Activated CD4-positive, alpha-beta memory T cell treated with anti-CD3 and anti-CD28 coated beads for 36 hours (primary cell): ENCODE measurements at regions of chr7 and their contacts with region 1.

Region 1: DNA sequence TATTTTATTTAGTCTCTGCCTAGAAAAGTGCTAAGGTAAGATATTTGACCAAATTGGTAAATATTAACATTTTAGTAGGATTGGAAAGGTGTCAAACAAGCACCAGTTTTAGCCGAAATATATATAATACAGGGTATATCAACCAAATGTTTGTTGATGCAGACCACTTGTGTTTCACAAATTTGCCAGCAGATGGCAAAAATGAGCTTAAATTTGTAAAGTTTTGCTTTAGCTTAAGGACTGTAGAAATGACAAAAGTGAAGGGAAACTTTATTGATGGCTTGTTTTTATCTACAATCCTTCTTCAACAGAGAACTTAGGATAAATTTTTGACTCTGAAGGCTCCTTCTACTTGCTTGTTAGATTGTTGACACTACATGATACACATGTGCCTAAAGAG is 4.8 kb upstream of the POLR1F start:
- DNase-seq: peak; percentile 39
- H3K4me3 Mint-ChIP-seq: no peak overlapping the region
- H3K27ac Mint-ChIP-seq: no peak overlapping the region
- H3K4me1 Mint-ChIP-seq: peaks cover 12% of the 10 kb centered on the region
- H3K27me3 Mint-ChIP-seq: peaks cover 4% of the 10 kb centered on the region

Region 2: DNA sequence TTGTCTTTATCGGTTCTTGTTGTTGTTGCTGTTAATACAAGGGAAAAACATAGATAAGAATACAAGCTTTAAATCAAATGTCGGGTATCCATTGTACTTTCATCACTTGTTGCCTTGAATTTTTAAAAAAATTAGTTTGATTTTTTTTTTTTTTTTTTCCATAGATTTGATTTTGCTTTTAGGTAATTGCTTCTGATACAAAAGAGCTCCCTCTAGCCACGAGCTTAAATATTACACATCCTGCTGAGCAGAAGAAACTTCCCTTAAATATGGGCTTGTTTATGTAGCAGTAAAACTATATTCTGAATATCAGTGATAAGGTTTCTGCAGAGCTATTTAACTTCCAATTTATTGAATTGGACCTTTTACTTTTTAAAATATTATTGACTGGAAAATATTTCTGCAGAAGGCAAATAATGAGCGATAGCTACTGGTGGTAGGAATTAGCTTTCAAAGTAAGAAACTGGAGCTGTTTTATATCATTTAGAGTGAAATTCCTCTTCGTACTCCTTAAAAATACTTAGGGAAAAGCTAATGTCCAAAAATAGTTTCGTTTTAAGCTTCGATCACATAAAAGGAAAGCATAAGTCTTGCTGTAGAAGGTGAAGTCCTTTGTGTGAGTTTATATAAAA is 221.7 kb before region 1 on chr7:
- CTCF ChIA-PET with region 1: no interaction called
- POLR2A ChIA-PET with region 1: no interaction called
- intact Hi-C with region 1: no loop called
- DNase-seq: no peak
- H3K4me3 Mint-ChIP-seq: no peak overlapping the region
- H3K27ac Mint-ChIP-seq: no peak overlapping the region
- H3K4me1 Mint-ChIP-seq: no peaks in the 10 kb centered on the region
- H3K27me3 Mint-ChIP-seq: no peaks in the 10 kb centered on the region

Region 3: DNA sequence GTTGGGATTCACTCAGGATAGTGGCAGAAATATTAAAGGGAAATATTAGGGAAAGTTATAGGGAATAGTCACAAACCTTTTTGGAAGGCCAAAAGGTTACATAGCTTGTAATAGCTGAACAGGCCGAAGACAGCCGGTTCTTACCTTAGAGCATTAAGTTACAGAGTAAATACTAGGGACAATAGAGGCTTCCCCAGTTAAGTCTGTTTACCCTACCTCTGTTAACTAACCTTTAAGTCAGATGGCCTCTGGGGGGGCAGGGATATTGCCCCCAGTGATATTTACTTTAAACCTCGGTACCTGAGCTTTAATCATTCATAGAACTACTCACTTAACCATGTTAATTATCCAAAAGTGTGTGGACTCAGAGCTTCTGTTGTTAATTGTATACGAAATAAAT is 12.2 kb before region 1 on chr7:
- CTCF ChIA-PET with region 1: interaction called, 15 read pairs
- POLR2A ChIA-PET with region 1: interaction called, 4 read pairs
- intact Hi-C with region 1: no loop called
- DNase-seq: no peak
- H3K4me3 Mint-ChIP-seq: no peak overlapping the region
- H3K27ac Mint-ChIP-seq: no peak overlapping the region
- H3K4me1 Mint-ChIP-seq: peaks cover 8% of the 10 kb centered on the region
- H3K27me3 Mint-ChIP-seq: no peaks in the 10 kb centered on the region

Region 4: DNA sequence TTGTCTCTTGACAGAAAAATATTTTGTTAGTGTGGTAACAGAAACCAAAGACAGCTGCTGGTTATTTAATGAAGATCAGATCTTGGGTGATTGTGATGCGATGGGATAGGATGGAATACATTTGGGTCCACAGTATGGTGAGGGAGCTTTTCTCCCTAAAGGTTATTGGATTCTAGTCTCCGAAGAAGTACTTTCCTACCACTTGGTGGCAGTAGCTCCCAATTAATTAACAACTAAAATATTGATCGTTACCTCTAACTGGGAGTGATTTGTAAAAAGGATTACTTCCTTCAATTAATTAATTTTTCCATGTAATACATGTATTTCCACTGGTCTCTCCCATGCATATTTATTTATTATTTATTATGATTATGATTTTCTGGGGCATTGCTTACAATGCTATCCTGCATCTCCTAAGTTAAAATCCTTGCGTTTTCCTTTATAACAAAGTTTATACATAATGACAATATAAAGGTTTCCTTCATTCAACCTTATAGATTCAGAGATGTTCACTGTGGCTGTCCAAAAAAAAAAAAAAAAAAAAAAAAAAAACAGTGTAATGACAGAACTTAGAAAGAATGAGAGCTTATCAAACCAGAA is 34.2 kb after region 1 on chr7:
- CTCF ChIA-PET with region 1: interaction called, 18 read pairs
- POLR2A ChIA-PET with region 1: no interaction called
- intact Hi-C with region 1: no loop called
- DNase-seq: no peak
- H3K4me3 Mint-ChIP-seq: no peak overlapping the region
- H3K27ac Mint-ChIP-seq: no peak overlapping the region
- H3K4me1 Mint-ChIP-seq: no peaks in the 10 kb centered on the region
- H3K27me3 Mint-ChIP-seq: peaks cover 5% of the 10 kb centered on the region

Region 5: GRCh38 chr7:19999681-20000080 is 286.0 kb after region 1 on chr7:
- CTCF ChIA-PET with region 1: no interaction called
- POLR2A ChIA-PET with region 1: no interaction called
- intact Hi-C with region 1: no loop called
- DNase-seq: no peak
- H3K4me3 Mint-ChIP-seq: no peak overlapping the region
- H3K27ac Mint-ChIP-seq: no peak overlapping the region
- H3K4me1 Mint-ChIP-seq: no peaks in the 10 kb centered on the region
- H3K27me3 Mint-ChIP-seq: no peaks in the 10 kb centered on the region

Region 6: GRCh38 chr7:20172736-20173334 is 459.2 kb after region 1 on chr7:
- CTCF ChIA-PET with region 1: interaction called, 5 read pairs
- POLR2A ChIA-PET with region 1: no interaction called
- intact Hi-C with region 1: loop called (anchors 1 kb)
- DNase-seq: peak; percentile 28
- H3K4me3 Mint-ChIP-seq: no peak overlapping the region
- H3K27ac Mint-ChIP-seq: no peak overlapping the region
- H3K4me1 Mint-ChIP-seq: no peaks in the 10 kb centered on the region
- H3K27me3 Mint-ChIP-seq: no peaks in the 10 kb centered on the region

Region 7: GRCh38 chr7:20310963-20311742 is 597.5 kb after region 1 on chr7:
- CTCF ChIA-PET with region 1: interaction called, 11 read pairs
- POLR2A ChIA-PET with region 1: no interaction called
- intact Hi-C with region 1: loop called (anchors 10 kb)
- DNase-seq: no peak
- H3K4me3 Mint-ChIP-seq: no peak overlapping the region
- H3K27ac Mint-ChIP-seq: no peak overlapping the region
- H3K4me1 Mint-ChIP-seq: no peaks in the 10 kb centered on the region
- H3K27me3 Mint-ChIP-seq: no peaks in the 10 kb centered on the region

Region 8: GRCh38 chr7:20598459-20599309 is 885.0 kb after region 1 on chr7:
- CTCF ChIA-PET with region 1: interaction called, 219 read pairs
- POLR2A ChIA-PET with region 1: no interaction called
- intact Hi-C with region 1: loop called (anchors 1 kb)
- DNase-seq: no peak
- H3K4me3 Mint-ChIP-seq: no peak overlapping the region
- H3K27ac Mint-ChIP-seq: no peak overlapping the region
- H3K4me1 Mint-ChIP-seq: no peaks in the 10 kb centered on the region
- H3K27me3 Mint-ChIP-seq: peaks cover 12% of the 10 kb centered on the region